Caco-2 (cell line): ENCODE measurements at regions of chr7 and their contacts with region 1.

Region 1: GRCh38 chr7:80134536-80135320 is at the start of gene GNAI1:
- DNase-seq: peak; percentile 41 to 66
- H3K4me3 ChIP-seq: peak within 1 kb of the TSS; percentile 73
- H3K4me3 Mint-ChIP-seq: peak within 1 kb of the TSS; percentile 74
- H3K27ac Mint-ChIP-seq: peak within 1 kb of the TSS; percentile 16
- H3K4me1 ChIP-seq: 0 out of 2 replicates have a peak, but pooled peaks cover 6% of the 10 kb centered on the region
- H3K4me1 Mint-ChIP-seq: peaks cover 5% of the 10 kb centered on the region
- H3K27me3 ChIP-seq: 0 out of 2 replicates have a peak, but pooled peaks cover 1% of the 10 kb centered on the region
- H3K27me3 Mint-ChIP-seq: peaks cover 23% of the 10 kb centered on the region
- CTCF ChIP-seq: peak; percentile 23 to 34
- total RNA-seq, gene GNAI1: 2.1 and 2.3 TPM in 2 replicates

Region 2: DNA sequence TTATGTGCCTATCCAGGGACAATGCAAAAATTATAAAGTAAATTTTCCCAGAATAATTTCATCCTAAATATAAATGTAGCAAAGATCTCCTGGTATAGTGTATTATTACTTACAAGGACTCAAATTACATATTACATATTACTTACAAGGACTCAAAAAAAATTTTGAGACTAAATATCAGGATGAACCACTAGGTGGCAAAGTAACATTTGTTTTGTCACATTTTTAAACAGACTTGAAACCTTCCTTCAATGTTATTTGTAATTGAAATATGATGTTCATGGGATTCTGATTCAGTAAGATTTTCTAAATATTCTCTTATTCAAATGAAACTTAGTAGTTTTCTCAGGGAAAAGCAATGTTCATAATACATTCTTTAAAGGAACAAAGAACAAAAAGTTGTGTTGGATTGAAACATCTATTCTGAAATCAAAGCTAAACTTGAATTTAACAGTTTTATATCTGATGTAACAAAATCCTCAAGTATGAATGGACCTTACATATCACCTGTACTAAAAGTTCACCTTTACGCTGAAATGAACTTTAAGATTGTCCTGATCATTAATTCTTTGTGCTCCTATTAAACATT is 74.4 kb before region 1 on chr7:
- CTCF ChIA-PET with region 1: no interaction called
- POLR2A ChIA-PET with region 1: no interaction called
- intact Hi-C with region 1: loop called (anchors 1 kb)
- DNase-seq: peak in 1 of 2 experiments; percentile 24
- H3K4me3 ChIP-seq: no peak overlapping the region
- H3K4me3 Mint-ChIP-seq: no peak overlapping the region
- H3K27ac Mint-ChIP-seq: no peak overlapping the region
- H3K4me1 ChIP-seq: no peaks in the 10 kb centered on the region; the same call in 1 of the 2 replicates
- H3K4me1 Mint-ChIP-seq: no peaks in the 10 kb centered on the region
- H3K27me3 ChIP-seq: no peaks in the 10 kb centered on the region
- H3K27me3 Mint-ChIP-seq: peaks cover 6% of the 10 kb centered on the region
- CTCF ChIP-seq: peak; percentile 31 to 43

Region 3: GRCh38 chr7:80206763-80207162 is 72.0 kb after region 1 on chr7:
- CTCF ChIA-PET with region 1: no interaction called
- POLR2A ChIA-PET with region 1: no interaction called
- intact Hi-C with region 1: loop called (anchors 5 kb)
- DNase-seq: no peak
- H3K4me3 ChIP-seq: no peak overlapping the region
- H3K4me3 Mint-ChIP-seq: no peak overlapping the region
- H3K27ac Mint-ChIP-seq: no peak overlapping the region
- H3K4me1 ChIP-seq: peaks cover 13% of the 10 kb centered on the region
- H3K4me1 Mint-ChIP-seq: peaks cover 20% of the 10 kb centered on the region
- H3K27me3 ChIP-seq: no peaks in the 10 kb centered on the region
- H3K27me3 Mint-ChIP-seq: no peaks in the 10 kb centered on the region
- CTCF ChIP-seq: peak in 1 of 2 experiments; percentile 15

Region 4: GRCh38 chr7:80288175-80289122 is 153.7 kb after region 1 on chr7:
- CTCF ChIA-PET with region 1: no interaction called
- POLR2A ChIA-PET with region 1: no interaction called
- intact Hi-C with region 1: loop called (anchors 10 kb)
- DNase-seq: no peak
- H3K4me3 ChIP-seq: no peak overlapping the region
- H3K4me3 Mint-ChIP-seq: no peak overlapping the region
- H3K27ac Mint-ChIP-seq: no peak overlapping the region
- H3K4me1 ChIP-seq: no peaks in the 10 kb centered on the region
- H3K4me1 Mint-ChIP-seq: no peaks in the 10 kb centered on the region
- H3K27me3 ChIP-seq: no peaks in the 10 kb centered on the region
- H3K27me3 Mint-ChIP-seq: peaks cover 9% of the 10 kb centered on the region
- CTCF ChIP-seq: no peak

Region 5: DNA sequence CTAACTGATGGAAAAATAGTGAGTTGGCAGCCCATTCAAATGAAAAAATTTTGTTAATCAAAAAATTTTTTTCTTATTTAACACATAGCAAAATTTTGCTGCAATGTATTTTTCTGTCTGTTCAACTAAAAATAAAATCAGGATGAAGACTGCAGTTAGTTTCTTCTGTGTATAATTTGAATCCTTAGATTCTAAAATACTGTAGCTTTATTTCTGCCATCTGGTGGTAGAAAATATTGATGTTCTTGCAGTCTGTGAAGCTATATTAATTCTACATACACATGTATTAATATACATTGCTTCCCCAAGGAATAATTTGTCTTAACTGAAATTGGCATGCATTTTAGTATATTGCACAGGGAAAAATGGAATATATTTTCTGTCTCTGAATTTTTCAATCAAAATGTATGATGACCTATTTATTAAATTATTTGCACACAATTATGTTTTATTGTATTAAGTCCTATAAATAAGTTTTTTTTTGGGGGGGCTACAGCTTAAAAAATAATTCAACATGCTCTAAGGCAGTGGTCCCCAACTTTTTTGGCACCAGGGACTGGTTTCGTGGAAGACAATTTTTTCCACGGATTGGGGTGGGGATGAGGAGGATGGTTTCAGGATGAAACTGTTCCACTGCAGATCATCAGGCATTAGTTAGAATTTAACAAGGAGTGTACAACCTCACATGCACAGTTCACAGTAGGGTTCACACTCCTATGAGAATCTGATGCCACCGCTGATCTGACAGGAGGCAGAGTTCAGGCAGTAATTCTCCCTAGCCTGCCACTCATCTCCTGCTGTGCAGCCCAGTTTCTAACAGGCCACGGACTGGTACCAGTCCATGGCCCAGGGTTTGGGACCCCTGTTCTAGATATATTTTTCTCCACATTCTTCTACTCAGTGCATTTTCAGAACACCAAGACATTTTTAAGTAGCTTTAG is 257.8 kb after region 1 on chr7:
- CTCF ChIA-PET with region 1: interaction called, 6 read pairs
- POLR2A ChIA-PET with region 1: no interaction called
- intact Hi-C with region 1: loop called (anchors 1 kb)
- DNase-seq: no peak
- H3K4me3 ChIP-seq: no peak overlapping the region
- H3K4me3 Mint-ChIP-seq: no peak overlapping the region
- H3K27ac Mint-ChIP-seq: no peak overlapping the region
- H3K4me1 ChIP-seq: no peaks in the 10 kb centered on the region
- H3K4me1 Mint-ChIP-seq: no peaks in the 10 kb centered on the region
- H3K27me3 ChIP-seq: no peaks in the 10 kb centered on the region
- H3K27me3 Mint-ChIP-seq: no peaks in the 10 kb centered on the region
- CTCF ChIP-seq: peak; percentile 31 to 33

Region 6: GRCh38 chr7:80453699-80454340 is 319.1 kb after region 1 on chr7:
- CTCF ChIA-PET with region 1: no interaction called
- POLR2A ChIA-PET with region 1: no interaction called
- intact Hi-C with region 1: loop called (anchors 10 kb)
- DNase-seq: peak in 1 of 2 experiments; percentile 13
- H3K4me3 ChIP-seq: no peak overlapping the region
- H3K4me3 Mint-ChIP-seq: no peak overlapping the region
- H3K27ac Mint-ChIP-seq: no peak overlapping the region
- H3K4me1 ChIP-seq: peaks cover 14% of the 10 kb centered on the region; the same call in 1 of the 2 replicates
- H3K4me1 Mint-ChIP-seq: no peaks in the 10 kb centered on the region
- H3K27me3 ChIP-seq: no peaks in the 10 kb centered on the region
- H3K27me3 Mint-ChIP-seq: no peaks in the 10 kb centered on the region
- CTCF ChIP-seq: peak; percentile 48 to 49

Region 7: DNA sequence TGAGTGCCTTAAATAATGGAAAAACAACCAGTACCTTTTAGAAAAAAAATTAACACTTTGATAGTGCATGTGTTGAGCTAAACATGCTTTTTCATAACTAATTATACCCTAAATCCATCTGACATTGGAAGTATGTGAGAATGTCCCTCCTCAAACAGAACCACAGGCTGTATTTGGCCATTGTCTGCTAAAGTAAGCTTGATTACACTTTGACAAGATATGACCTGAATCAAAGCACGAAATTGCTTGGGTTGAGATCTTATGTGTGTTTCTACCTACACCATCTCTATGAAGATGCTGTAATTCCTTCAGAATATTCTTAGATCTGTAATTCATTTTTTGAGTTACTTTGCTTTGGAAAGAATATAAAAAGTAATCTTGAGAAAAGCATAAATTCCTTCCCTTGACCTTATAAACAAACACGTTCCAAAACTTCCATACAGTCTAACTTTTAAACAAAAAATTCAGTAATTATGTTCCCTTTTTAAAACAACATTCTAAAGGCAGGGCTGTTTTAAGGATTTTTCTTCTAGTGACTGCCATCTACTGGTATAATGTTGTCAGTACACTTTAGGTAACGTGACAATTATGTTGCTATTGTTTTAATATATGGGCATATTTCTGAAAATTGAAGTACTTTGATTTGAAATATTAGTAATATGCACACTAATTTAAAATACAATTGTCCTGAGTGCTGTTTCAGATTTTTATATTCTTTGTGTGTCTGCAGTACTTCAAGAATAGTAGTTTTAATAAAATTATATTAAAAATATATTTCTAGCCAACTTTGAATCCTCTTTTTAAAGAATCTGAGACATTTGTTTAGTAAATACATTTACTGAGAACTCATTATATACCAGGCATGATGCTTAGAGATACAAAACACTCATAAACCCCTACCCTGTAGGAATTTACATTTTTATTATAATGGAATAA is 524.7 kb after region 1 on chr7:
- CTCF ChIA-PET with region 1: no interaction called
- POLR2A ChIA-PET with region 1: no interaction called
- intact Hi-C with region 1: loop called (anchors 5 kb)
- DNase-seq: no peak
- H3K4me3 ChIP-seq: no peak overlapping the region
- H3K4me3 Mint-ChIP-seq: no peak overlapping the region
- H3K27ac Mint-ChIP-seq: no peak overlapping the region
- H3K4me1 ChIP-seq: no peaks in the 10 kb centered on the region
- H3K4me1 Mint-ChIP-seq: no peaks in the 10 kb centered on the region
- H3K27me3 ChIP-seq: no peaks in the 10 kb centered on the region
- H3K27me3 Mint-ChIP-seq: peaks cover 13% of the 10 kb centered on the region
- CTCF ChIP-seq: peak; percentile 25 to 43